ENCODE measurements at regions of chr19 and their contacts with region 1.

Region 1: GRCh38 chr19:35247526-35248306 is 1.1 kb upstream of the LSR start:
- DNase-seq: peak; percentile 94 to 96 (median 96)
- ATAC-seq: peak; percentile 83
- H3K4me3 ChIP-seq: peak overlapping the region; percentile 86 to 93
- H3K27ac ChIP-seq: peak overlapping the region; percentile 94 to 100 (median 100)
- H3K4me1 ChIP-seq: peaks cover 26% of the 10 kb centered on the region
- H3K27me3 ChIP-seq: no peaks in the 10 kb centered on the region
- CTCF ChIP-seq: peak; percentile 41 to 93 (median 78)
- POLR2A ChIP-seq: peak; percentile 47 to 83 (median 56)

Region 2: GRCh38 chr19:35140962-35141637 is 106.6 kb before region 1 on chr19:
- intact Hi-C with region 1: loop called (anchors 10 kb)
- DNase-seq: peak; percentile 92 to 94 (median 94)
- ATAC-seq: peak; percentile 78
- H3K4me3 ChIP-seq: no peak overlapping the region
- H3K27ac ChIP-seq: peak overlapping the region in 3 of 4 donors; percentile 60 to 72 (median 71)
- H3K4me1 ChIP-seq: peaks cover 36% of the 10 kb centered on the region
- H3K27me3 ChIP-seq: no peaks in the 10 kb centered on the region
- CTCF ChIP-seq: peak; percentile 18 to 54 (median 33)
- POLR2A ChIP-seq: peak in 1 of 3 donors; percentile 13